Activated T-helper 1 cell treated with anti-CD3 and anti-CD28 coated beads, Interleukin-12 subunit alpha, Interleukin-12 subunit beta, Interleukin-2, Interleukin-4 antibody, amounts not matched to agents 30 ng/mL and 10 ng/mL and 1 ng/mL, durations not matched to agents 14 hours and 24 hours and 36 hours (primary cell): ENCODE measurements at regions of chr2 and their contacts with region 1.

Region 1: GRCh38 chr2:197378494-197379307 is 56.1 kb downstream of the SF3B1 start:
- DNase-seq: peak; percentile 40
- H3K4me3 Mint-ChIP-seq: no peak overlapping the region
- H3K27ac Mint-ChIP-seq: peak overlapping the region; percentile 11
- H3K4me1 Mint-ChIP-seq: peaks cover 24% of the 10 kb centered on the region
- H3K27me3 Mint-ChIP-seq: peaks cover 10% of the 10 kb centered on the region

Region 2: GRCh38 chr2:197011799-197012641 is 366.7 kb before region 1 on chr2:
- intact Hi-C with region 1: loop called (anchors 1 kb)
- DNase-seq: no peak
- H3K4me3 Mint-ChIP-seq: no peak overlapping the region
- H3K27ac Mint-ChIP-seq: peak overlapping the region; percentile 74
- H3K4me1 Mint-ChIP-seq: peaks cover 6% of the 10 kb centered on the region
- H3K27me3 Mint-ChIP-seq: peaks cover 2% of the 10 kb centered on the region

Region 3: GRCh38 chr2:197075759-197076337 is 302.9 kb before region 1 on chr2:
- intact Hi-C with region 1: loop called (anchors 2 kb)
- DNase-seq: no peak
- H3K4me3 Mint-ChIP-seq: no peak overlapping the region
- H3K27ac Mint-ChIP-seq: no peak overlapping the region
- H3K4me1 Mint-ChIP-seq: peaks cover 39% of the 10 kb centered on the region
- H3K27me3 Mint-ChIP-seq: no peaks in the 10 kb centered on the region

Region 4: DNA sequence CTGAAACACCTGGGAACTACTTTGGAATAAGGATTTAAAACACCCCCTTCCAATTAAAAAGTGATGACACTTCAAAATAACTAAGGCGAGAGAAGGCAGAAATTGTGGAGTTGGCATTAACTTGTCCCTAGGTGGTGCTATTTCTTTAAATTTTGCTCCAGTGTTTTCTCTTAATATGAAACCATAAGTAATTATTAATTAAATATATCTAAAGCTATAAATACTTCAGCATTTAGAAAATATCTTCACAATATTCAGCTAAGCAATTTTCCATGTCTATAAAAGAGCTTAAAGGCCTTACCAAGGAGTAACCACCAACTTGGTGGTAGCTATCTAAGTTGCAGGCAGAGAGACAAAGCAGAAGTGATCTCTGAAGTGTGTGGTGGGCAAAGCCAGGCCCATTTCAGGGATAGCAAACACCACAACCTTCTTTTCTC is 265.4 kb before region 1 on chr2:
- intact Hi-C with region 1: loop called (anchors 1 kb)
- DNase-seq: no peak
- H3K4me3 Mint-ChIP-seq: no peak overlapping the region
- H3K27ac Mint-ChIP-seq: no peak overlapping the region
- H3K4me1 Mint-ChIP-seq: peaks cover 18% of the 10 kb centered on the region
- H3K27me3 Mint-ChIP-seq: no peaks in the 10 kb centered on the region

Region 5: DNA sequence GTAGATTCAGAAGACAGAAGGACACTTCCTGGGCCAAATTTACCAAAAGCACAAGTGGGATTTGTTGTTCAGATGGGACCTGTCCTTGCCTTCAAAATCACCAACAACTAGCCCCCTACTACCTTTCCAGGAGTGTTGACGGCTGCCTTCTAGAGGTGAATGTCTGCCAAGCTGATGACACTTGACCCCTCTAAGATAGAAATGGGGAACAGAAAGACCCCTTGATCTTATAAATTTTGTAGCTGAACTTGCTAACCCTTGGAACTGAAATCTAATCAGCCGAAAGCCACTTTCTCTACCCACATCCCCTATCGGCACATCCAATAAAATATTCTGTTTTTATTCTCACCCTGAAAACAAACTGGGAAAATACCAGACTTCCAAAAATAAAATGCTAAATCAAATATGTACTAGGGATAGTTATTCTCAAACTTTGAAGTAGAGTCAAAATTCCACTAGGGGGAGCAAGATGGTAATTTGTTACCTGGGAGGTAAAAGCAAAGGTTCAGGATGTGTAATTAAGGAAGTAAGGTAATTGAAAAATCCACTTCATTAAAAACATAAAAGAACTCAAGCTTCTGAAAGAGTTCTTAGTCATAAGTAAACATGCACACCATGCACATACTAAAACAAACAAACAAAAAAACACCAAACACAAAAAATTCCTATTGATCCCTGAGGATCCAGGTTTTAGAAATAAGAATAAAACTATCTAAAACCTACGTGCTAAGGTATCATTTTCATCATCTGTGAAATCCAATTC is 187.3 kb before region 1 on chr2:
- intact Hi-C with region 1: loop called (anchors 1 kb)
- DNase-seq: no peak
- H3K4me3 Mint-ChIP-seq: peak overlapping the region; percentile 0
- H3K27ac Mint-ChIP-seq: peak overlapping the region; percentile 47
- H3K4me1 Mint-ChIP-seq: peaks cover 83% of the 10 kb centered on the region
- H3K27me3 Mint-ChIP-seq: no peaks in the 10 kb centered on the region

Region 6: DNA sequence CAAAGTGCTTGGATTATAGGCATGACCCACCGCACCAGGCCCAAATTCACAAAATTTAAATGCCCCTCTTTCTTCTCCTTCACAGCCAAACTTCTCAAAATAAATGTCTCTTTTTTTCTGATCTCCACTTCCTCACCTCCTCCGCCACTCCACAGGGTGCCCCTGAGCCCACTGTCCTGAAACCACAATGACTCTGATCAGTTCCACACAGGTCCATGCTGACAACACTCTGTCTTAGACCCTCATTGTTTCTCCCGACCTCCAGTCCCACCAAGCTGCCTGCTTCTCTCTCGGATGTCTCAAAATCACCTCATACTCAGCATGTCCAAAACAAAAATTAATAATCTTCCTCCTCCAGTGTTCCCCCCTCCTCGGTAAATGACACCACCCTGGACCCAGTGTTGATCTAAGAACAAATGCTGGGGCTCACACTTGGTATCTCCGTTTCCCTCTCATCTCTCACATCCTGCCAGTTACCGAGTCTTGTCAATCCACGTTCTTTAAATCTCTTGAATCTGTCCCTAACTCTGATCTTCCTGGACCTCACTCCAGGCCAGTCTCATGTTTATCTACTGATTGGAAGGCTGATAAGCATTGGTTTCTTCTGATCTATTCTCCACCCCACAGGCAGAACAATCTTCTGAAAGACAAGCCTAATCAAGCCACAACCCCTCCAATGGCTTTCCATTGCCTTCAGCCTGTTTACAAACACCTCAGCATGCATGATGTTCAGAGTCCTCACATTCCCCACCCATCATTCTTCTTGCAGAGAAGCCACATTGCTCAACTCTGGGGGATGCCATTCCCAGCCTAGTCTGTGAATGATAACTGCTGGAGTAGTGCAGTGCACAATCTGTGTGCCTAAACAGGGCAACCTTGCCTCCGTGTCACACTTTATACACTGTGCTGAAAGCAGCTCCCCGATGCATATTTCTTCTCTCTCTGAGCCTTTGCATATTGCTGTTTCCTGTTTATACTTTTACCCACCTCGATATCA is 55.7 kb before region 1 on chr2:
- intact Hi-C with region 1: loop called (anchors 2 kb)
- DNase-seq: no peak
- H3K4me3 Mint-ChIP-seq: peak overlapping the region; percentile 71
- H3K27ac Mint-ChIP-seq: peak overlapping the region; percentile 87
- H3K4me1 Mint-ChIP-seq: peaks cover 50% of the 10 kb centered on the region
- H3K27me3 Mint-ChIP-seq: no peaks in the 10 kb centered on the region